ENCODE measurements at regions of chr2 and their contacts with region 1.

Region 1: DNA sequence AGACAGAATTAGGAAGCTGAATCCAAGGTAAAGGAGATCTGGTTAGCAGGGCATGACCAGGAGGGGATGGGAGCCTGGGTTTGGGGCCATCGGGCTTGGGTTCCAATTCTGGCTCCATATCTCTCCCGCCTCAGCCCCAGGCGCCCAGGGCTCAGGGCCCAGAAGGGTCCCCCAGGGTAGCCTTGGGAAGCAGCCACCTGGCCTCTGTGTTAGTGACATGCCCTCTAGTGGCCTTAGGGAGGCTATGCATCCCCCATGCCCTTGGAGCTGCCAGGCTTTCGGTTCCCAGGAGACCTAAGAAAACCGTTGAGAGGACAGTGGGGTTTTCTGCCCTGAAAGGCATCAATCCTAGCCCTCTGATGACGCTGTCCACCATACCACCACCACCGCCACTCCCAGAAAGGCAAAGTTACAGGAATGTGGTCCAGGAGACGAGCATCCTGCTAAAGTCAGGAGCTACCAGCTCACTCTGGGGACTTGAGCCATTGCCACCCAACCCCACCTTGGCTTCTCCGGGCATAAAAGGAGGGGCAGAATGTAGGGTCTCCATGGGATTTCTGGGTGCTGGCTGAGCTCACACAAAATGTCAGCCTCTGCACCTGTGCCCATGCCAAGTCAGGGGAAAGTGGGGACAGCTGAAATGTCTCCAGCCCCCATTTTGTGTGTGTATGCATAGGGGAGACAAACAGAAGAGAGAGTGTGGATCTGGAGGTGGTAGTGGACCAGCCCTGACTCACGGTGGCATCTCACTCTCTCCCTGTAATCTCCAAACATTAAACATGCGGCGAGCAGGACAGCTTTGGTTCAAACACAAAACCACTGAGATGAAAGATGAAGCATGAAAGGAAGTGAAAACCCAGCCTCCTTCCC is 56.5 kb downstream of the EMX1 start:
- DNase-seq: peak; percentile 86
- H3K4me3 ChIP-seq: peak overlapping the region in 1 of 2 experiments; percentile 5; a peak in 1 of 4 replicates
- H3K27ac ChIP-seq: no peak overlapping the region
- H3K4me1 ChIP-seq: peaks cover 0 to 15% of the 10 kb centered on the region in 2 experiments; a peak in 1 of 4 replicates
- H3K27me3 ChIP-seq: no peaks in the 10 kb centered on the region
- CTCF ChIP-seq: peak; percentile 82
- EP300 ChIP-seq: no peak
- RAD21 ChIP-seq: peak; percentile 69

Region 2: DNA sequence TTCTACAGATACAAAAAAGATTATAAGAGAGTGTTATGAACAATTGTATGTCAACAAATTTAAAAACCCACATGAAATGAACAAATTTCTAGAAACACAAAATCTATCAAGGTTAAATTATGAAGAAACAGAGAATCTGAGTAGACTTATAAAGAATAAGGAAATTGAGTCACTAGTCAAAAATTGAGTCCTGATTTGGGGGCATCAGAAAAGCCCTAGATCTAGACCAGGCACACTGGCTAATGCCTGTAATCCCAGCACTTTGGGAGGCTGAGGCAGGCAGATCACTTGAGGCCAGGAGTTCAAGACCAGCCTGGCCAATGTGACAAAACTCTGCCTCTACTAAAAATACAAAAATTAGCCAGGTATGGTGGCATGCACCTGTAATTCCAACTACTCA is 101.9 kb before region 1 on chr2:
- CTCF ChIA-PET with region 1: no interaction called
- POLR2A ChIA-PET with region 1: no interaction called
- DNase-seq: no peak
- H3K4me3 ChIP-seq: no peak overlapping the region
- H3K27ac ChIP-seq: no peak overlapping the region
- H3K4me1 ChIP-seq: no peaks in the 10 kb centered on the region
- H3K27me3 ChIP-seq: no peaks in the 10 kb centered on the region; the same call in 1 of the 2 replicates
- CTCF ChIP-seq: no peak
- EP300 ChIP-seq: no peak
- RAD21 ChIP-seq: no peak

Region 3: DNA sequence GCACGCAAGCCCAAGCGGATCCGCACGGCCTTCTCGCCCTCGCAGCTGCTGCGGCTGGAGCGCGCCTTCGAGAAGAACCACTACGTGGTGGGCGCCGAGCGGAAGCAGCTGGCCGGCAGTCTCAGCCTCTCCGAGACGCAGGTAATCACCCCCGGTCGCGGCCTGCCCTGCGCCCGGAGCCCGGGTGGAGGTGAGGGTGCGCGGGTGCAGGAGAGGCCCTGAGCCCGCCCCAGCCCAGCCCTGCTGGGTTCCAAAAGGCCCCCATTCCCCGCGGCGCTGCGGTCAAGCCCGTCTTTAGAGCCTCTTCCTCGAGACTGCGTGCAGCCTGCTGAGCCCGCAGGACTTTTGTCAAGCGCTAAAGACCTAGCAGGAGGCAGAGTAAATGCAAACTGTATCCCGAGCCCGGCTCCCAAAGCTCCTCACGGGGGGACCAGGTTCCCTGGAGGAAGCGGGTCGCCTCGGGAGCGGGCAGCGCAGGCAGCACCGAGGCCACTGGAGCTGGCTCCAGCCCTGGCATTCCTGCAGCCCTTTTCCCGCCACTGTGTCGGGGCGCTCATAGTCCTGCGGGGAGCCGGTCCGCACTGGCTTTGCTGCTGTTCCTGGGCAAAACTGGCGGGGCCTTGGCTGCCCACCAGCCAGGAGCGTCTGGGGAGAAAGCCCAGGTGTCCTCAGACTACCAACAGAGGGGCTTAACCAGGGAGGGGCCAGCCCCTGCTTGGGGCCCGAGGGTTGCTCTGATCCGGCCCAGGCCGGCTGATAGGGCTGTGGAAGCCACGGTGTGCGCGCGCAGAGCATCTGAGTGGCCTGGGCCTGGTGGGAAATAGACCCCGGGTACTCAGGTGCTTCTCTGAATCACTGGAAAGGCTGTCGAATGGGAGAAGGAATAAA is 49.2 kb before region 1 on chr2:
- CTCF ChIA-PET with region 1: interaction called, 29 read pairs
- POLR2A ChIA-PET with region 1: no interaction called
- DNase-seq: peak; percentile 60
- H3K4me3 ChIP-seq: no peak overlapping the region
- H3K27ac ChIP-seq: no peak overlapping the region
- H3K4me1 ChIP-seq: peaks cover 3 to 7% of the 10 kb centered on the region in 2 experiments; a peak in 2 of 4 replicates
- H3K27me3 ChIP-seq: peaks cover 98% of the 10 kb centered on the region
- CTCF ChIP-seq: no peak
- EP300 ChIP-seq: no peak
- RAD21 ChIP-seq: no peak

Region 4: GRCh38 chr2:72940786-72941185 is 33.0 kb before region 1 on chr2:
- CTCF ChIA-PET with region 1: interaction called, 13 read pairs
- POLR2A ChIA-PET with region 1: no interaction called
- DNase-seq: no peak
- H3K4me3 ChIP-seq: no peak overlapping the region
- H3K27ac ChIP-seq: no peak overlapping the region
- H3K4me1 ChIP-seq: peaks cover 0 to 11% of the 10 kb centered on the region in 2 experiments; a peak in 1 of 4 replicates
- H3K27me3 ChIP-seq: no peaks in the 10 kb centered on the region
- CTCF ChIP-seq: no peak
- EP300 ChIP-seq: no peak
- RAD21 ChIP-seq: no peak

Region 5: DNA sequence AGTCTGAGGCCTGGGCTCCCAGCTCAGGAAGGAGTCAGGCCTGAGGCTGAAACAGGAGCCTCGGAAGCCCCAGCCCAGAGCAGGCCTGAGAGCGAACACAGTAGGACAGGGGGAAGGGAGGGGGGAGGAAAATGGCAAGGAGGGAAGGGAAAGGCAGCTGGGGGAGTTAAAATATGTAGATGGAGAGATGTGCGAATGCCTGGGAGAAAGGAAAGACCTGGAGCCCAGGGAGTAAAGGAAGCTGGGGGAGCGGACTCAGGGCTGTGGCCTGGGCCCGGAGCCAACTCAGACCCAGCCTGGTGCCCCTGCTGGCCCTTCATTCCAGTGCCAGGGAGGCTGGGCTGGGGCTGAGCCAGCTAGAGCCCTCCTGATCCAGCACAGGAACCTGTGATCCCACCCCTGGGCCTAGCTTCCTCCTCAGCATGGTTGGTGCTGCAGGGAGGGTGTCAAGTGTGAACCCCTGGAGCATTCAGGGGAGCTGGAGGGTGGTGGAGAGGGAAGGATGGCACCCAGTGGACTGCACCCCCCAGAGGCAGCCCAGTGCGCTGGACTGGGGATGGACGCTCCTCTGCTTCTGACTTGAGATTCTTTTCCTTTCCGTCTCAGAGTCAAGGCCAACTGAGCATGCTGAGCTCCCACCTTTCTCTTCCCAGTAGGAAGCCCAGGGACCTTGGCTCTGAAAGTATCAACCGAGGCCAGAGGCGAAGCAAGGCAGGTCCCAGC is 10.2 kb before region 1 on chr2:
- CTCF ChIA-PET with region 1: interaction called, 33 read pairs
- POLR2A ChIA-PET with region 1: no interaction called
- DNase-seq: peak; percentile 82
- H3K4me3 ChIP-seq: no peak overlapping the region
- H3K27ac ChIP-seq: no peak overlapping the region
- H3K4me1 ChIP-seq: peaks cover 0 to 7% of the 10 kb centered on the region in 2 experiments; a peak in 1 of 4 replicates
- H3K27me3 ChIP-seq: no peaks in the 10 kb centered on the region
- CTCF ChIP-seq: no peak
- EP300 ChIP-seq: no peak
- RAD21 ChIP-seq: no peak

Region 6: GRCh38 chr2:73063909-73064875 is 90.4 kb after region 1 on chr2:
- CTCF ChIA-PET with region 1: no interaction called
- POLR2A ChIA-PET with region 1: no interaction called
- DNase-seq: no peak
- H3K4me3 ChIP-seq: no peak overlapping the region
- H3K27ac ChIP-seq: peak overlapping the region; percentile 54 to 83
- H3K4me1 ChIP-seq: peaks cover 4 to 24% of the 10 kb centered on the region in 2 experiments; a peak in 3 of 4 replicates
- H3K27me3 ChIP-seq: no peaks in the 10 kb centered on the region
- CTCF ChIP-seq: no peak
- EP300 ChIP-seq: 0 out of 4 replicates have a peak, but pooled peaks of 1 of the 2 experiments have one; percentile 39
- RAD21 ChIP-seq: no peak